A549 (cell line): ENCODE measurements at regions of chr17 and their contacts with region 1.

Region 1: DNA sequence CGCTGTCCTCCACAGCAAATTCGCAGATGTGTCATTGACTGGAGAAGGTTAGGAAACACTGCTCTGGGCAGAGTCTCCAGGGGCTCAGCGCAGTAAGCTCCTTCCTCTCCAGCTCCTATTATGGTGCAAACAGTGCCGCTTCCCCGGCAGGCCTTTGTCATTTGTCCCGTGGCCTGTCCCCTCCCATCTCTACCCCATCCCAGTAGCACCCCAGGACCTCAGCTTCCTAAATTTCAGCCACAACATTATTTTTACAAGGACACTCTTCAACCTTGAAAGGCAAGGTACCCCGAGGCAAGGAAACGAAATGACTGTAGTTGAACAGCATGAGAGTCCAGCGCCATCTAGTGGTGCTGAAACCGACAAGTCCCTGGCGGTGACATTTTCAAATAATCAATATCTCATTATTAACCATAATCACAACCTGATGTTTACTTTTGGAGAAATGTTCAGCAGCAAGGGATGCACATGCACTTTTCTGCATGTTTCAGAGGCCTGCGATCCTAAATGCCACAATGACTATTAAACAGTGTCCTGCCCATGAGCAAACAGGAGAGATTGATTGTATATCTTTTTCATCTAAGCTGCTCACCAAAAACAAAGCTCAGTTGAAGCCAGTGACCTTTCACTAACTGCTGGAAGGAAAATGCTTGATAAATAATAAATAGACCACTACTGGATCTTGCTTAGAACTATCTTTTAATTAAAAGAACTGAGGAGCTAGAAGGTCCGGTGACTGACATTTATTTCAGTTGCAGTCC is 16.5 kb downstream of the MRPS23 start:
- DNase-seq: peak; percentile 59 to 68
- ATAC-seq: peak; percentile 71 to 79; a peak in 5 of 6 replicates
- H3K4me3 ChIP-seq: no peak overlapping the region
- H3K27ac ChIP-seq: peak overlapping the region in 1 of 2 experiments; percentile 46; a peak in 3 of 6 replicates
- H3K4me1 ChIP-seq: peaks cover 14% of the 10 kb centered on the region; the same call in 1 of the 3 replicates
- CTCF ChIP-seq: peak; percentile 99
- EP300 ChIP-seq: no peak
- POLR2A ChIP-seq: no peak
- RAD21 ChIP-seq: peak; percentile 86 to 88

Region 2: DNA sequence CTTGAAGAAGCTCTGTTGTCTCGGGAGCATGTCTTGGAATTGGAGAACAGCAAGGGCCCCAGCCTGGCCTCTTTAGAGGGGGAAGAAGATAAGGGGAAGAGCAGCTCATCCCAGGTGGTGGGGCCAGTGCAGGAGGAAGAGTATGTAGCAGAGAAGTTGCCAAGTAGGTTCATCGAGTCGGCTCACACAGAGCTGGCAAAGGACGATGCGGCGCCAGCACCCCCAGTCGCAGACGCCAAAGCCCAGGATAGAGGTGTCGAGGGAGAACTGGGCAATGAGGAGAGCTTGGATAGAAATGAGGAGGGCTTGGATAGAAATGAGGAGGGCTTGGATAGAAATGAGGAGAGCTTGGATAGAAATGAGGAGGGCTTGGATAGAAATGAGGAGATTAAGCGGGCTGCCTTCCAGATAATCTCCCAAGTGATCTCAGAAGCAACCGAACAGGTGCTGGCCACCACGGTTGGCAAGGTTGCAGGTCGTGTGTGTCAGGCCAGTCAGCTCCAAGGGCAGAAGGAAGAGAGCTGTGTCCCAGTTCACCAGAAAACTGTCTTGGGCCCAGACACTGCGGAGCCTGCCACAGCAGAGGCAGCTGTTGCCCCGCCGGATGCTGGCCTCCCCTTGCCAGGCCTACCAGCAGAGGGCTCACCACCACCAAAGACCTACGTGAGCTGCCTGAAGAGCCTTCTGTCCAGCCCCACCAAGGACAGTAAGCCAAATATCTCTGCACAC is 727.1 kb before region 1 on chr17:
- CTCF ChIA-PET with region 1: interaction called, 11 read pairs
- POLR2A ChIA-PET with region 1: no interaction called
- DNase-seq: peak in 1 of 2 experiments; percentile 57
- ATAC-seq: peak; percentile 70 to 91
- H3K4me3 ChIP-seq: no peak overlapping the region
- H3K27ac ChIP-seq: peak overlapping the region in 1 of 2 experiments; percentile 63; a peak in 2 of 6 replicates
- H3K4me1 ChIP-seq: peaks cover 30% of the 10 kb centered on the region
- CTCF ChIP-seq: peak; percentile 52
- EP300 ChIP-seq: no peak
- POLR2A ChIP-seq: no peak
- RAD21 ChIP-seq: peak; percentile 25 to 33; a peak in 2 of 5 replicates

Region 3: DNA sequence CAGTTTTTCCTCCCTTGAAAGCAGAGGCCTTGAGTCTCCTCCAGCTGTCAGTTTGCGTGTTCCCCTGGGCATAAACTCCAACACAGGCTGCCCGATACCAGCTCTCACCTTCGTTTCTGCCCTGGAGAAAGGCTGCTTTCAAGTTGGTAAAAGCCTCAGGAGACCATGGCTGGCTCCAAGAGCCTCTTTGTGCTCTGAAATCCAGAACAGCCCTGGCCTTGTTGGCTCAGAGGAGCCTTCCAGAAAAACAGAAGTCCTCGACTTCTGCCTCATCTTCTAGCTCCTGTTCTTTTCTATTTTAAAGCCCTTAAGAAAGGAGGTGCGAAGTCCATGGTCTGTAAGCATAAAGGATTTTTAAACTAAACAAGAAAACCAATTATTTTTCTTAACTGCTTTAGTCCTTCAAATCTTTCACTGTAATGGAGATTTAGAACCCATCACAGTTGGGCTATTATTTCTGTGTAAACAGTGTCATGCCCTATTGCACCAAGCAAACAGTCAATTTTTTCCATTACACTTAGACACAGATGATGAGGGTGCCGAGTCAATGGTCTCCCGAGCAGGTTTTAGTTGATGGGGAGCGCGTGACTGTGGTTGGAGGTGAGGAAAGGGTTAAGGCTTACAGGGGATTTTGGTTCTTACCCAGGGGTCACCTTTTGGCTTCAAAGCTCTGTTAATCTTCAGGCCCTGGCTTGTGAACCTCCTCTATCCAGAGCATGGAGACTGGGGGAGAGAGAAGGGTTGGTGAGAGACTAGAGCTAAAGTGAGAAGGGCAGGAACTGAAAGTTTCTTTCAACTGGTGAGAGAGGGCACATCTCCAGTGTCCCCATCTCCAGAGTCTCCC is 364.2 kb before region 1 on chr17:
- CTCF ChIA-PET with region 1: no interaction called
- POLR2A ChIA-PET with region 1: no interaction called
- DNase-seq: no peak
- ATAC-seq: no peak
- H3K4me3 ChIP-seq: no peak overlapping the region
- H3K27ac ChIP-seq: peak overlapping the region in 1 of 2 experiments; percentile 19; a peak in 1 of 6 replicates
- H3K4me1 ChIP-seq: peaks cover 11% of the 10 kb centered on the region; the same call in 2 of the 3 replicates
- CTCF ChIP-seq: no peak
- EP300 ChIP-seq: no peak
- POLR2A ChIP-seq: no peak
- RAD21 ChIP-seq: no peak

Region 4: GRCh38 chr17:57597531-57598453 is 235.6 kb before region 1 on chr17:
- CTCF ChIA-PET with region 1: interaction called, 20 read pairs
- POLR2A ChIA-PET with region 1: no interaction called
- DNase-seq: peak; percentile 82 to 86
- ATAC-seq: peak; percentile 85 to 93
- H3K4me3 ChIP-seq: no peak overlapping the region
- H3K27ac ChIP-seq: peak overlapping the region; percentile 46 to 54; a peak in 5 of 6 replicates
- H3K4me1 ChIP-seq: peaks cover 15% of the 10 kb centered on the region
- CTCF ChIP-seq: peak; percentile 97
- EP300 ChIP-seq: no peak
- POLR2A ChIP-seq: no peak
- RAD21 ChIP-seq: peak; percentile 86 to 87

Region 5: GRCh38 chr17:57747221-57748017 is 85.9 kb before region 1 on chr17:
- CTCF ChIA-PET with region 1: interaction called, 18 read pairs
- POLR2A ChIA-PET with region 1: no interaction called
- DNase-seq: peak; percentile 79 to 84
- ATAC-seq: peak; percentile 80 to 91
- H3K4me3 ChIP-seq: no peak overlapping the region
- H3K27ac ChIP-seq: no peak overlapping the region
- H3K4me1 ChIP-seq: no peaks in the 10 kb centered on the region
- CTCF ChIP-seq: peak; percentile 96
- EP300 ChIP-seq: no peak
- POLR2A ChIP-seq: no peak
- RAD21 ChIP-seq: peak; percentile 93 to 98

Region 6: GRCh38 chr17:57803025-57803424 is 30.3 kb before region 1 on chr17:
- CTCF ChIA-PET with region 1: interaction called, 23 read pairs
- POLR2A ChIA-PET with region 1: no interaction called
- DNase-seq: no peak
- ATAC-seq: no peak
- H3K4me3 ChIP-seq: no peak overlapping the region
- H3K27ac ChIP-seq: no peak overlapping the region
- H3K4me1 ChIP-seq: no peaks in the 10 kb centered on the region
- CTCF ChIP-seq: no peak
- EP300 ChIP-seq: no peak
- POLR2A ChIP-seq: no peak
- RAD21 ChIP-seq: no peak

Region 7: DNA sequence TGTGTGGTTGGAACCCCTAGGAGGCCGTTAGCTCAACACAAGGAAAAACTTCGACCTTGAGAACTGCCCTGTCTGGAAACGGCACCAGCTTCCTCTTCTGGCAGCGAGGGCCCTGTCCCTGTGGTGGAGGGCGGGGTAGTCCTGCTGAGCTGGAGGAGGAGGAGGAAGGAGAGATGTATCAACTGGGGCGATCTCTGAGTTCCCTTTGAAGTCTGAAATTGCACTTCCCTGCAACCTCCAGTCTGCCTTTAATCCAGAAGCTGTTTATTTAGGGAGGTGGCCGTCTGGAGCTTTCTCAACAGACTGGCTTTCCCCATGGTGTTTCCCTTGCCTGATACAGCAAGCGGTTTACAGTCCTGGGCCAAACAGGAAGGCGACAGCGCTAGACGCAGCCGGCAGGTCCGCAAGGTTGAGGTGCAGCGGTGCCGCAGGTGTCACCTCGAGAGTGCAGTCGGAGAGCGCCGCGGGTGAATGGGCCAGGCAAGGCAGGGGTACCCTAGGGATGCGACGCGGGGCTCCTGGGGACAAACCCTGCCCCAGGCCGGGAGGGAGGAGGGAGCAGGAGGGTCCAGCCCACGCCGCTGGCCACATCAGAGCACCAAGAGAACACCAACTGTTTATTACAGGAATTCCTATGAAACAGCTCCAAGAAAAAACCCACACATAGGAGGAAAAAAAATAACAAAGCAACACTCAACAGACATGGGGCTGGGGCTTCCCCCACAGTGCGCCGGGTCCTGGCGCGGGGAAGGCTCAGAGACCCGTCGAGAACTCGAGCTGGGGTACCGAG is 27.8 kb after region 1 on chr17:
- CTCF ChIA-PET with region 1: interaction called, 25 read pairs
- POLR2A ChIA-PET with region 1: no interaction called
- DNase-seq: peak; percentile 78 to 90
- ATAC-seq: peak; percentile 37 to 64
- H3K4me3 ChIP-seq: peak overlapping the region; percentile 40
- H3K27ac ChIP-seq: peak overlapping the region; percentile 92 to 95
- H3K4me1 ChIP-seq: peaks cover 73% of the 10 kb centered on the region
- CTCF ChIP-seq: no peak
- EP300 ChIP-seq: peak; percentile 68 to 88; a peak in 4 of 5 replicates
- POLR2A ChIP-seq: peak; percentile 24; the same call in 1 of the 2 replicates
- RAD21 ChIP-seq: peak; percentile 20 to 34; a peak in 1 of 5 replicates

Region 8: DNA sequence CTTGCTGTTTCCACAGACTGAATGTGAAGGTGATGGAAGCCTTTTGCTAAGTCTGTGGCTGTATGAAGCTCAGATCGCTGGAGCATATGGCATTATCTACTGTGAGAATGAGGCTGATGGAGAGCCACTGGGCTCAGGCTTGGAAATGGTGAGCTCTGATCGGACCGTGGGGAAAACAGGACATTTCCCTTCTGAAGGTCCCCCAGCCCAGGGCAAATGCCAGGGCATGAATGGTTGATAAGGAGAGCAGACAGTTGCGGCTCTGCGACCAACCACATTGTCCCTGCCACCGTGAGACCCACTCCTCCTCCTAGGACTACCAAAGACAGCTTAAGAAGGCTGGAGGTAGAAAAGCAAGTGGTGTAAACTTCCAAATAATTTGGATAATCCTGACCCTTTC is 126.6 kb after region 1 on chr17:
- CTCF ChIA-PET with region 1: no interaction called
- POLR2A ChIA-PET with region 1: no interaction called
- DNase-seq: no peak
- ATAC-seq: no peak
- H3K4me3 ChIP-seq: no peak overlapping the region
- H3K27ac ChIP-seq: peak overlapping the region; percentile 32 to 60
- H3K4me1 ChIP-seq: peaks cover 45% of the 10 kb centered on the region
- CTCF ChIP-seq: no peak
- EP300 ChIP-seq: no peak
- POLR2A ChIP-seq: no peak
- RAD21 ChIP-seq: no peak

Region 9: DNA sequence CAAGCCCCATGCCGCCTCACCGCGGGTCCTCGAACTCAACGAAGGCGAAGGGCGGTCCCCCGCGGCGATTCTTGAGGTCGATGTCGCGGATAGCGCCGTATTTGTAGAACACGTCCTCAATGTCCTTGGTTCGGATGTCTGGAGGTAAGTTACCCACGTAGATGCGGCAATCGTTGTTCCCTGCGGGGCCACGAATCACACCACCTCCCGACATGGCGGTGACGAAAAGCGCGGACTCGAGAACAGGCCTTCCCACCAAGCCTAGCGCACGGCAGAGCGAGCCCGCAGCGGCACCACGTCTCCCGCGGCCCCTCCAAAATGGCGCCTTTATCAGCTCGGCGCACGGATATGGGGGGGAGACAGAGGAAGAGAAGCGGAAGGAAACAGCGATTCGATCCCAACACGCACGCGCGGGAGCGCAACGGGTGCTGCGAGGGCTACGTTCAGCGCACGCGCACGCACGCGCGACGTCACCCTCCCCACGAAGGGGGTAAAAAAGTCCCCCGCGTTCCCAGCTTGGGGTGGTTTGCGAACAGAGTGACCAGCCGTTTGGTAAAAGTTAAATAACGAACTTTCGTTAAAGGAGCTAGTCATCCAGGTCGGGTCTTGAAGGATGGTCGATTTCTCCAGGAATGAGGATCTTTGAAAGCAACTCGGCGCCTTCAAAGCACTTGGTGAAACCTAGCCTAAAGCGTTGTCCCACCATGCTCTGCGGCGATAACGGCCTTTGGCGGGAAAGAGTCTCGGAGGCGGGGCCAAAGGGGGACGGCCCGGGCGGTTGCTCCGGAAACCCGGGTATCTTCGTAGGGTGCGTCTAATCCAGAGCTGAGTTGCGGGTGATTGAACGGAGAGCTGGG is 173.8 kb after region 1 on chr17 and contains the start of gene SRSF1:
- CTCF ChIA-PET with region 1: interaction called, 12 read pairs
- POLR2A ChIA-PET with region 1: no interaction called
- DNase-seq: peak; percentile 98 to 99
- ATAC-seq: peak; percentile 89 to 92
- H3K4me3 ChIP-seq: peak within 1 kb of the TSS; percentile 71
- H3K27ac ChIP-seq: peak within 1 kb of the TSS; percentile 95 to 97
- H3K4me1 ChIP-seq: peaks cover 39% of the 10 kb centered on the region
- CTCF ChIP-seq: no peak
- EP300 ChIP-seq: no peak
- POLR2A ChIP-seq: peak; percentile 98
- RAD21 ChIP-seq: no peak
- polyA plus RNA-seq, gene SRSF1: 332 and 490 TPM in 2 replicates